SK-N-SH (cell line): ENCODE measurements at regions of chr2 and their contacts with region 1.

Region 1: DNA sequence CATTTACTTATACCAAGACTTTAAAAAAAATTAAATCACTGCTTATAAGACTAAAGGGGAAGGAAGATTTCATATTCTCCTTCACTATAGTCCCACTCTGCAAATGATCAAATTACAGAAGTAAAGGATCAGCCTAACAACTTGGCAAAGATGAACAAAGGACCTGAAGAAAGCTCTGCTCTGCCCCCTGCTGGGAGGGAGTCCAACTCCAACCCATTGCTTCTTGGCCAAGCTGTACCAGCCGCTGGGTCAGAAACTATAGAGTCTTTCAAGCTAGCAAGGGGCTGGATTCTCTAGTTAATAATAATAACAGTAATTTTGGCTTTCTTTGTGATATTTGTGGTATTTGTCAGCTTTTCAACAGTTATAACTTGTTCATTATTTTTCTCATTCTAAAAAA is 927.0 kb upstream of the CRIM1 start:
- DNase-seq: peak; percentile 19
- H3K4me3 ChIP-seq: peak overlapping the region in 1 of 2 experiments; percentile 18; a peak in 1 of 4 replicates
- H3K27ac ChIP-seq: no peak overlapping the region
- H3K4me1 ChIP-seq: no peaks in the 10 kb centered on the region
- H3K27me3 ChIP-seq: no peaks in the 10 kb centered on the region
- CTCF ChIP-seq: peak; percentile 77
- EP300 ChIP-seq: no peak
- RAD21 ChIP-seq: peak; percentile 44

Region 2: GRCh38 chr2:35391736-35392442 is 36.7 kb before region 1 on chr2:
- CTCF ChIA-PET with region 1: no interaction called
- POLR2A ChIA-PET with region 1: no interaction called
- DNase-seq: peak; percentile 9
- H3K4me3 ChIP-seq: no peak overlapping the region
- H3K27ac ChIP-seq: no peak overlapping the region
- H3K4me1 ChIP-seq: no peaks in the 10 kb centered on the region
- H3K27me3 ChIP-seq: no peaks in the 10 kb centered on the region
- CTCF ChIP-seq: no peak
- EP300 ChIP-seq: no peak
- RAD21 ChIP-seq: no peak

Region 3: GRCh38 chr2:35447215-35447614 is 18.7 kb after region 1 on chr2:
- CTCF ChIA-PET with region 1: interaction called, 15 read pairs
- POLR2A ChIA-PET with region 1: no interaction called
- DNase-seq: no peak
- H3K4me3 ChIP-seq: no peak overlapping the region
- H3K27ac ChIP-seq: no peak overlapping the region
- H3K4me1 ChIP-seq: no peaks in the 10 kb centered on the region
- H3K27me3 ChIP-seq: no peaks in the 10 kb centered on the region
- CTCF ChIP-seq: no peak
- EP300 ChIP-seq: no peak
- RAD21 ChIP-seq: no peak

Region 4: GRCh38 chr2:35468245-35468644 is 39.7 kb after region 1 on chr2:
- CTCF ChIA-PET with region 1: no interaction called
- POLR2A ChIA-PET with region 1: no interaction called
- DNase-seq: no peak
- H3K4me3 ChIP-seq: no peak overlapping the region
- H3K27ac ChIP-seq: no peak overlapping the region
- H3K4me1 ChIP-seq: no peaks in the 10 kb centered on the region
- H3K27me3 ChIP-seq: no peaks in the 10 kb centered on the region
- CTCF ChIP-seq: no peak
- EP300 ChIP-seq: no peak
- RAD21 ChIP-seq: no peak